ENCODE measurements at regions of chr22 and their contacts with region 1.

Region 1: DNA sequence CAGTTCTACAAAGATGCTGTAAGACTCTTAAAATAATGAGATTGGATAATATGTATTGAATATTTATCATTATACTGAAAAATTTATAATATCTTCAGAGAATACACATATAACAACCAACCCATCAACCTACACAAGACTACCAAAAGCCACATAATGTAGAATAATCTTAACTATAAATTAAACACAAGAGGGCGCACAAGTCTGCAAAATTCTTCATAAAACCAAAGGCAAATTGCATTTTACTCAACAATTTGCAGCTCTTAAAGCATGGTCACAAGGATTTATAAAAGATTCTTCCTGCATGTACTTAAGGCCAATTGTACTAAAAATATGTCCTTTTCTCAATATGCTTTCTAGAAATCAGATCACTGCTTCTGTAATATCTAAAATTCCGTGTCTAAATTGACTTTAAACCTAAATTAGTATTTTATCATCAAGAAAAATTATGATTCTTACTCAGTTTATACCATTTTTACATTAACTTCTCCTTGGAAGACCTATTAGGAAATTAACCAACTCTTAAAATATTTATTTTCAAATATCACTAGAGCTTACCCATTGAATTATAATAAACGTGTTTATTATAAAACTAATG is 79.0 kb downstream of the TTC28 start:
- DNase-seq: no peak
- ATAC-seq: no peak
- H3K4me3 Mint-ChIP-seq: no peak overlapping the region
- H3K27ac Mint-ChIP-seq: no peak overlapping the region
- H3K4me1 Mint-ChIP-seq: no peaks in the 10 kb centered on the region
- H3K27me3 Mint-ChIP-seq: peaks cover 18% of the 10 kb centered on the region
- CTCF ChIP-seq: peak; percentile 80

Region 2: DNA sequence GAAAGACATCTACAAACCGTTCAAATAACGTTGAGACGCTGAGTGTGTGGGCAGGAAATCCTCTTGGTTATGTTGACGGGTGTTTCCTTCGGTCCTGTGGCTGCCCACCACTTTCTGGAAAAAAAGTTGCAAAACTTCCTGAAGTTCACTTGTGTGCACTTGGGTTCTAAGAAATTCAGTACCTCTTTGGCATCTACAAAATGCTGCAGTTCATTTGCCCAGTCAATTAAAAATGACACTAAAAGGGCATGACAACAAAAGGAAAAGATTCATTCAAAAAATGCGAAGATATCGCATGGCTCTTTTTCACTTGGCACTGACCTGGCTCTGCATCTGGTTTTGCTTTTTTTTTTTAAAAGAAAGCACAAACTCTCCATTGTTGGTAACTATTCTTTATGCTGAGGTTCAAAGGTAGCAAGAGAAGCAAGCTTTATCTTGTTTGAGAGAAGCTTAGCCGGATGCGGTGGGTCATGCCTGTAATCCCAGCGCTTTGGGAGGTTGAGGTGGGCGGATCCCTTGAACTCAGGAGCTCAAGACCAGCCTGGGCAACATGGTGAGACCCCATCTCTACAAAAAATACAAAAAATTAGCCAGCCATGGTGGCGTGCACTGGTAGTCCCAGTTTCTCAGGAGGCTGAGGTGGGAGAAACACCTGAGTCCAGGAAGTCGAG is 210.3 kb after region 1 on chr22:
- CTCF ChIA-PET with region 1: interaction called, 14 read pairs
- POLR2A ChIA-PET with region 1: no interaction called
- intact Hi-C with region 1: no loop called
- DNase-seq: peak; percentile 66
- ATAC-seq: peak; percentile 28
- H3K4me3 Mint-ChIP-seq: peak overlapping the region; percentile 65
- H3K27ac Mint-ChIP-seq: peak overlapping the region; percentile 83
- H3K4me1 Mint-ChIP-seq: peaks cover 62% of the 10 kb centered on the region
- H3K27me3 Mint-ChIP-seq: no peaks in the 10 kb centered on the region
- CTCF ChIP-seq: no peak

Region 3: DNA sequence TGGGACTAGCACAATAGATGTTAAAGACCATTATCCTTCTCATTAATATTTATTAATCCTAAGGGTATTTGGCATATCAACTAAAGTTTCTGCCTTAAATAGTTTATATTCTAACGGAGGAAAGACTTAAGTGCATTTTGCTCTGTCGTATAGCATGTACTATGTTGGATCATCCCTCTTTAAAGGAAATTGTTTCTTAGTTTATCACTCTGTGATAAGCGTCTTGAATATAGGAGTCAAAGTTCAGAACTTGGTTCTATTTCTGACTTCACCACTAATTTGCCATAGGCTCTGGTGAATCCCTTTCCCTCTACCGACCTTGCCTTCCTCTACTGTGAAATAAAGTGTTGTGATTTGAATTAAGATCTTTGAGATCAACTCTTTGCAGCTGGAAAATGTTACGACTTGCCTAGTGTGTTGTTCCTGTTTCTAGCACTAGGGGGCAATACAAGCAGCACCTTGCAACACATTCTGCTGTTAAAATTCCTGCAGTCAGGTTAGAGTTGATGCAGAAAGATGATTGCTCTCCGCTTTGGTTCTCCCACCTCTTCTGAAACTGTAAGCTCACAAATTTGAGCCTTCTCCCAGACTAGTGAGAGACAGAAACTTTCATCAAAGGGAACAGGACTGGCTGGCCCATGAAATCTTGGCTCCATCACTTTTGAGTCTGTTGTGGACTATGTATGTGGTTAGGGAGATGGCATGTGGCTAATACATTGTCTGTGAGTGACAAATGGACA is 254.9 kb after region 1 on chr22:
- CTCF ChIA-PET with region 1: interaction called, 11 read pairs
- POLR2A ChIA-PET with region 1: no interaction called
- intact Hi-C with region 1: no loop called
- DNase-seq: peak; percentile 52
- ATAC-seq: peak; percentile 62
- H3K4me3 Mint-ChIP-seq: no peak overlapping the region
- H3K27ac Mint-ChIP-seq: no peak overlapping the region
- H3K4me1 Mint-ChIP-seq: no peaks in the 10 kb centered on the region
- H3K27me3 Mint-ChIP-seq: peaks cover 4% of the 10 kb centered on the region
- CTCF ChIP-seq: peak; percentile 95

Region 4: DNA sequence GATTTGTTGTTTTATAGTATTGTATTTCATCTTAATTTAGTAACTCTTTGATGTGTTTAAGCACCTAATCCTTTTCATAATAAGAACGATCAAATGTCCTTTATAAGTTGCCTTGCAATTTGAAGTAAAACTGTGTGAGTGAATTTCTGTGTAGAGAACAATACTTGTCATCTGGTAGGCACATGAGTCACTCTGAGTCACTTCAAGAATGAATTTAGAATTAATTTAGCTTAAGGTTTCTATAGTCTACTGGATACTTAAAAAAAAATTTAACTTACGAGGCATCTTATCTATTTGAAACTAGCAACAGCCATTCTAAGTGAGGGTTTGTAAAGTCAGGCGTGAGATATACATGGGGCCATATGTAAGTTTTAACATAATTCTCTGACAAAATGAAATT is 375.9 kb after region 1 on chr22:
- CTCF ChIA-PET with region 1: no interaction called
- POLR2A ChIA-PET with region 1: no interaction called
- intact Hi-C with region 1: no loop called
- DNase-seq: no peak
- ATAC-seq: peak; percentile 55
- H3K4me3 Mint-ChIP-seq: no peak overlapping the region
- H3K27ac Mint-ChIP-seq: no peak overlapping the region
- H3K4me1 Mint-ChIP-seq: peaks cover 17% of the 10 kb centered on the region
- H3K27me3 Mint-ChIP-seq: peaks cover 52% of the 10 kb centered on the region
- CTCF ChIP-seq: no peak

Measured in activated CD8-positive, alpha-beta T cell treated with anti-CD3 and anti-CD28 coated beads for 36 hours (primary cell).